Common myeloid progenitor, CD34-positive (primary cell): ENCODE measurements at regions of chr3 and their contacts with region 1.

Region 1: DNA sequence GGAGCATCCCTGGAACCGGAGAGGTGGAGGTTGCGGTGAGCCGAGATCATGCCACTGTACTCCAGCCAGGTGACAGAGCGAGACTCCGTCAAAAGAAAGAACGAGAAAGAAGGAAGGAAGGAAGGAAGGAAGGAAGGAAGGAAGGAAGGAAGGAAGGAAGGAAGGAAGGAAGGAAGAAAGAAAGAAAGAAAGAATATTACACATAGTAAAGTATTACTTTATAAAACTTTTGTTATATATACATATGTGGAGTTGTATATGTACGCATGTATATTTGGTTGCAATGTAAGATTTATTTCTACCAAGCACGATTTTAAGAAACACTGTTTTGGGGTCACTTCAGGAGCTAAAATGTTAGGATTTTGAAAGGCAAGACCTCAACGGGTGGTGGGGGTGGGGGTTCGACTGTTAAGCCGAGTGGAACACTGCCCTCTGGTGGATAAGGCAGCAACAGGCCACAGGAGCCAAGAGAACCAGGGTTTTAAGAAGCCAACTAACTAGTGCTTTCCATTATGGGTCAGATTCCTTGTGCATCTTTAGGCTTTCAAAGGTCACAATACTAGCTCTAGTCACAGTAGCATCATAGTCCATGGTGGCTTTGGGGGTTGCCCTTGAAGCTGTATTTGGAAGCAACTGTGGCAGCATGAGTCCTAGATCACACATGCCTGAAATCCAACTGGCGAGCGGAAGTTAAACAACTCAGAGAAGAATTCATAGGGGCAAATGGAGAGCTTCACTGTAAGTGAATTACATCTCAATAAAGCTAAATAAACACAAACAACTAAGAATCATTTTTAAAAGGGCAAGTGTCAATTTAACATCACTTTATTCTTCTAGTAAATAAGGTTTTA is 22.5 kb downstream of the GLB1 start:
- DNase-seq: peak; percentile 73 to 87 (median 81)
- H3K4me3 ChIP-seq: no peak overlapping the region
- H3K27ac ChIP-seq: no peak overlapping the region
- H3K4me1 ChIP-seq: peaks cover 0 to 7% (median 0%) of the 10 kb centered on the region in 4 experiments
- H3K27me3 ChIP-seq: no peaks in the 10 kb centered on the region

Region 2: GRCh38 chr3:32961189-32961715 is 113.2 kb before region 1 on chr3:
- CTCF ChIA-PET with region 1: interaction called, 10 read pairs
- POLR2A ChIA-PET with region 1: no interaction called
- DNase-seq: no peak
- H3K4me3 ChIP-seq: no peak overlapping the region
- H3K27ac ChIP-seq: no peak overlapping the region
- H3K4me1 ChIP-seq: peaks cover 0 to 2% (median 0%) of the 10 kb centered on the region in 4 experiments
- H3K27me3 ChIP-seq: no peaks in the 10 kb centered on the region

Region 3: DNA sequence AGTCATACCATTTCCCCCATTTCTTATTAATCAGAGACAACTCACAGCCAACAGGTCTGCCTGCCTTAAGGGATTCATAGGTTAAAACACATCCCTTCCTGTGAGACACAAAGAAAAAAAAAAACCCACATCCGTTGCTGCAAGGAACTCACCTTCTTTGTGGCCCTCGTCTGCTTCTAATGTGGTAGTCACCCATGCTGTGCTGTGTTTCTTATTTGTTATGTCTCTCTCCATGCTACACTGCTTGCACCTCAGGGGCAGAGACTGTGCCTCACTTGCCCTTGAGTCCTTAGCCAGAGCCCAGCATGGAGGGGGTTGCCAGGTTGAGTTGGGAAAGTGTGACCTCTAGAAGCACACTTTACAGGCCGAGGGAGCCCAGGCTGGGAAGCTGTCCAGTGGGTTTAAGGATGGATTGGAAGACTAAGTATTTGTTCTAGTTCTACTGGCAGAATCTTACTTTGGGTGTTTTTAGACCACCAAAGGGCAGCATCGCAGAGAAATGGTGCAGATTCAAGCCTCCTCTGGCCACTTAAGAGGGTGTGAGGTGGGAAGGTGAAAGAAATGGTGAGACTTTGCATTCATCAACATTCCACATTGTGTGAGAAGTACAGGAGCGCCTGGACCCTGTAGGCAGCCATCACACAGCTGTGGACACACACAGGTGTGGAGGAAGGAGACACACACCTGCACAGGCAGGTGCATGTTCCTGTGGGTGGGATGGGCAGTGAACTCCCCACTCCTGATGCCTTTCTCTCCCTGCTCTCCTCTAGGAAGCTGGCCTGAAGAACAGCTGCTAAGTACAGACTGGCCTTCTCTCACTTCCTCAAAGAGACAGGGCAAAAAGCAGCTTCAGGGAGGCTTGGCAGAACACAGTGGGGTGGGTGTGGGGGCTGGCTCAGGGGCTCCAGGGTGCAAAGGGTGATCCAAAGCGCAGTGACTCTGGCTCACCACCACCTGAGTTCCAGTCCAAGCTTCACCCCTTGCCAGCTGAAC is 26.3 kb before region 1 on chr3:
- CTCF ChIA-PET with region 1: interaction called, 11 read pairs
- POLR2A ChIA-PET with region 1: no interaction called
- DNase-seq: no peak
- H3K4me3 ChIP-seq: no peak overlapping the region
- H3K27ac ChIP-seq: no peak overlapping the region
- H3K4me1 ChIP-seq: peaks cover 0 to 12% (median 4%) of the 10 kb centered on the region in 4 experiments
- H3K27me3 ChIP-seq: no peaks in the 10 kb centered on the region

Region 4: GRCh38 chr3:33089515-33089914 is 15.1 kb after region 1 on chr3:
- CTCF ChIA-PET with region 1: interaction called, 19 read pairs
- POLR2A ChIA-PET with region 1: no interaction called
- DNase-seq: peak in 2 of 3 donors; percentile 45 to 49
- H3K4me3 ChIP-seq: no peak overlapping the region
- H3K27ac ChIP-seq: no peak overlapping the region
- H3K4me1 ChIP-seq: peaks cover 0 to 3% (median under 1%) of the 10 kb centered on the region in 4 experiments
- H3K27me3 ChIP-seq: no peaks in the 10 kb centered on the region